Right cardiac atrium (tissue), 5 donors: ENCODE measurements at regions of chr10 and their contacts with region 1.

Region 1: DNA sequence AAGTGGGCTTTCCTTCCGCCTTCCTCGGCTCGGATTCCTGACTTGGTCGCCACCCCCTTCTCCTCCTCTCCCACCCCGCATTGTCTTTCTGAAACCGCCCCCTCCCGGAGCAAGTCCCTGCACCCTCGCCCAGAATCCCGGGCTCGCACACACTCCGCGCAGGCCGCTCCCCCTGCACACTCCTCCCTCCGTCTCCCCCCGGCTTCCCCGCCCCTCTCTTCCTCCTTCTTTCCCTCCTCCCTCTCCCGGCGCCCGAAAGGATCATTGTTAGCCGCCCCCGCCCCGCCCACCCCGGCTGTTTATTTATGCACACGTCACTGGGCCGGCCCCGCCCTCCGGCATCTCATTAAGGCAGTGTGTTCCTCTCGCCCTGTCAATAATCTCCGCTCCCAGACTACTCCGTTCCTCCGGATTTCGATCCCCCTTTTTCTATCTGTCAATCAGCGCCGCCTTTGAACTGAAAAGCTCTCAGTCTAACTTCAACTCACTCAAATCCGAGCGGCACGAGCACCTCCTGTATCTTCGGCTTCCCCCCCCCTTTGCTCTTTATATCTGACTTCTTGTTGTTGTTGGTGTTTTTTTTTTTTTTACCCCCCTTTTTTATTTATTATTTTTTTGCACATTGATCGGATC is at the start of gene TCF7L2:
- DNase-seq: peak; percentile 96 to 99 (median 98)
- ATAC-seq: peak; percentile 96
- H3K4me3 ChIP-seq: peak within 1 kb of the TSS; percentile 100
- H3K27ac ChIP-seq: peak within 1 kb of the TSS; percentile 98
- H3K4me1 ChIP-seq: peaks cover 4% of the 10 kb centered on the region
- H3K27me3 ChIP-seq: no peaks in the 10 kb centered on the region
- total RNA-seq, gene TCF7L2: 15.6 to 18.7 (median 16.6) TPM

Region 2: DNA sequence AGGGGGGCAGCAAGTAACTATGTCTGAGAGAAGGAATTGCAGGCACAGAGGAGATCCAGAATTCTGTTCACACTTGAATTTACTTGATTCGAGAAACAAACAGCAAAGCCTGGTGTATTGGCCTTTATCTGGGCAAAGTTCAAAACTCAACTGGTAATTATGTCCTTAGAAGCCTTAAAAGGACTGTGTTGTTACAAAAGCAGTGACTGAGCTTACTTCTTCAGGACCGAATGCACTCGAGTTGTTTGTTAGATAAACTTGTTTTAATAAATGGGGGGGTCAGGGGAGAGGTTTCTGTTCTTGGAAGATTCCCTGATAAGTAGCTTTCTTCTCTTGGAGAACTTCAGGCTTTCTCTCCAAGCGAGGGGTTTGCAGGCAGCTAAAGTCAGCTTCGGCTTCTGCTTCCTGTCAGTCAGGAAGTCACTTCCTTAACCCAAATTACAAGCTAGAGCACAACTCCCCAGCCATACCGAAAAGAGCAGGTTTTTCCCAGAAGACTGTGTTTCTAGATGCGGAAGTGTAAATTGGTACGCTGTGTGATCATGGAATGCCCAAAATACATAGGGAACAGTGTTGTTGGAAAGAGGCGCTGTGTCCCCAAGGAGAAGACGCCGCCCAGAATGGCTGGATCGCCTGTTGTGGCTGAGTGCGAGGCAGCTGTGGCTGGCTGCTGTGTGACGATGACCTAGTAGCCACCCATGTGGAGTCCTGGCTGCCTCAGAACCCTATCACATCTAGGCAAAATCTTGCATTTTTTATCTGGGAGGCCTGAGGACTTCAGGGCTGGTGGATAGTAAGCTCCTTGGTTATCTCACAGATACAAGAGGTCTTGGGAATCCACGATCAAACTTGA is 110.4 kb after region 1 on chr10:
- intact Hi-C with region 1: loop called in 1 of 4 experiments (anchors 10 kb)
- DNase-seq: peak; percentile 75 to 93 (median 85)
- ATAC-seq: peak; percentile 76 to 83
- H3K4me3 ChIP-seq: peak overlapping the region; percentile 33
- H3K27ac ChIP-seq: peak overlapping the region; percentile 92
- H3K4me1 ChIP-seq: peaks cover 31% of the 10 kb centered on the region
- H3K27me3 ChIP-seq: no peaks in the 10 kb centered on the region

Region 3: GRCh38 chr10:113073549-113074189 is 123.7 kb after region 1 on chr10:
- intact Hi-C with region 1: loop called in 2 of 4 experiments (anchors 5 to 10 kb)
- DNase-seq: peak; percentile 85 to 88 (median 87)
- ATAC-seq: peak; percentile 87 to 95
- H3K4me3 ChIP-seq: no peak overlapping the region
- H3K27ac ChIP-seq: peak overlapping the region; percentile 78
- H3K4me1 ChIP-seq: peaks cover 9% of the 10 kb centered on the region
- H3K27me3 ChIP-seq: no peaks in the 10 kb centered on the region